Right ventricle myocardium inferior (tissue), 1 donor: ENCODE measurements at regions of chr6 and their contacts with region 1.

Region 1: GRCh38 chr6:36867471-36868224 is 7.0 kb downstream of the PPIL1 start:
- DNase-seq: peak; percentile 73
- ATAC-seq: peak; percentile 90

Region 2: DNA sequence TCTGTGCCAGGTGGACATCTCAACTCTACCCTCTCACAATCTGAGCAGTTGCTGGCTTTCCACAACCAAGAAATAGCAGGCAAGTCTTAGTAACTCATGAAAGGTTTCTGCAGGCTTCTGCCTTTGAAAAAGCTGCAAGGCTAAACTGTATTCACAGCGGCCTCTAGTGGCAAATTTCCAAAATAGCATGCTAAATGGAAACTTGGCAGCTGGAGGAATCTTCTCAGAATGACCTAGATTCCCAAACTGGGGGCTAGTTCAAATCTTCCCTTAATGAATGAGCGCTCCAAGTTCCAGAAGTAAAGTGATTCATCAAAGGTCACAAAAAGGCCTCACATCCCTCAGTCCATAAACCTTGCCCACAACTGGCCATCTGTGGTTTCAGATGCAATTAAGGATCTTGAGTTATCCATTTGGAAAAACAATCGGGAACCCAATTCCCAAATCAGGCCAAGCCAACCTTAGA is 16.5 kb before region 1 on chr6:
- intact Hi-C with region 1: loop called (anchors 1 kb)
- DNase-seq: no peak
- ATAC-seq: peak; percentile 30